MCF 10A (cell line): ENCODE measurements at regions of chr2 and their contacts with region 1.

Region 1: DNA sequence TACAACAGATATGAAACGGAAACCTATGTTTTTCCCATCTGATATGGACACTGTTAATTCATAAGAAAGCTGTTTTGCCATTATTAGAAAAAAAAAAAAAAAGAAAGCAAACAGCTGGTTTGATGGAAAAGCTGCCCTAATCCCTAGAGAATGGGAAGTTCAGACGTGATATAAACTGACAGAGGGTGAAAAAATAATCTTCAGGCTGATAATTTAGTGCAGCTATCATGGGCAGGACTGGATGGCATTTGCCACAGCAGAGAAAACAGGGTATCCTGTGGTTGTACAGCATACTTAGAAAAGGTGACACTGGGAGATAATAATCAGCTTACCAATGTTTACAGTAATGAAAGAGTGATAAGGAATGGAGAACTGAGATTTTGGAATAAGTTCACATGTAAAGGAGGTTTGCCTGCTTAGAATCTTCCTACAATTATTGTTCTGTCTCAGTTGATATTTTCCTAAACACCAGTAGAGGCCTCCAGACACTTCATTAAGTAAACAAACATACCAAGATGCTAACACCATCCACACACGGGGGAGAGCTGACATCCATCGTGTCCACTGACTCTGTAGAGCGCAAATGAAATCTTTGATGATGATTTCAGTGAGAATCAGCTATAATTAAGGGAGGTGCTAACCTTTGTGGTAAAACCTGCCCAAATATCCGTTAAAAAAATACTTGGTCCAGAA is 211.6 kb upstream of the MMADHC start:
- DNase-seq: peak; percentile 42
- H3K4me3 Mint-ChIP-seq: no peak overlapping the region
- H3K27ac Mint-ChIP-seq: no peak overlapping the region
- H3K4me1 Mint-ChIP-seq: no peaks in the 10 kb centered on the region
- H3K27me3 Mint-ChIP-seq: no peaks in the 10 kb centered on the region
- CTCF ChIP-seq: peak; percentile 33

Region 2: GRCh38 chr2:149782572-149782971 is 16.6 kb before region 1 on chr2:
- CTCF ChIA-PET with region 1: interaction called, 11 read pairs
- POLR2A ChIA-PET with region 1: no interaction called
- intact Hi-C with region 1: no loop called
- DNase-seq: no peak
- H3K4me3 Mint-ChIP-seq: no peak overlapping the region
- H3K27ac Mint-ChIP-seq: no peak overlapping the region
- H3K4me1 Mint-ChIP-seq: no peaks in the 10 kb centered on the region
- H3K27me3 Mint-ChIP-seq: no peaks in the 10 kb centered on the region
- CTCF ChIP-seq: no peak